AG04449 (cell line): ENCODE measurements at regions of chr11 and their contacts with region 1.

Region 1: GRCh38 chr11:123511037-123511870 is 81.2 kb downstream of the GRAMD1B start:
- DNase-seq: peak; percentile 70
- H3K4me3 ChIP-seq: peak overlapping the region; percentile 25
- CTCF ChIP-seq: peak; percentile 95

Region 2: DNA sequence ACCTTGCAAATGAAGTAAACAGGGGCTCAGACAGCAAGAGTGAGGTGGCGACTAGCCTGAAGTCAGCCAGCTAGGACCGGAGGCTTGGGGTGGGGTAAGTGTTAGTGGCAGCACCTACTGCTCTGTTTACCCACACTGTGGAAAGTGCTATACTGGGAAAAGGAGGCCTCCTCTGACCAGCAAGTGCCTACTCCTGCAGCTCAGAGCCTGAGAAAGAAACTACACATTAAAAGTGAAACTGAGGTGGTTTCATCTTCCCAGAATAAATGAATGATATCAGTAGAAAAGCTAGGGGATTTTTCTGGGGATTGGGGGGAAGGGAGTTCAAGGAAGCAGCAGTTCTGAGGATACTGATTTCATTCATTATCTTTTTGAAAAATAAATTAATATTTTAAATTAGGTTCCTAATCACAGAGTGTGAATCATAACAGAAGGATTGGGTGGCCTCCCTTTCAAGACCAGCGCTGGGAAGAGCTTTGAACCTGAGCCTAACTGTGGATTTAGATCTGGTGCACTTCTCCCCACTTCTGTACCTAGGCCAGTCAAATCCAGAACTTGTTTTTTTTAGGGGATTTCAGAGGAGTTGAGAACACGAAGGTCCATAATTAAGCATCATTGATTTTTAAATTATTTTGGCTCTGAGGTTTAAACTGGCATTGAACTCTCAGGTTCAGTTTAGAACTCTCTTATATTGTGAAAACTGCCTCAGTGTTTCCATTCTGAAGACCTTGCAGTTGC is 129.3 kb before region 1 on chr11:
- CTCF ChIA-PET with region 1: no interaction called
- POLR2A ChIA-PET with region 1: no interaction called
- DNase-seq: no peak
- H3K4me3 ChIP-seq: no peak overlapping the region
- CTCF ChIP-seq: no peak

Region 3: DNA sequence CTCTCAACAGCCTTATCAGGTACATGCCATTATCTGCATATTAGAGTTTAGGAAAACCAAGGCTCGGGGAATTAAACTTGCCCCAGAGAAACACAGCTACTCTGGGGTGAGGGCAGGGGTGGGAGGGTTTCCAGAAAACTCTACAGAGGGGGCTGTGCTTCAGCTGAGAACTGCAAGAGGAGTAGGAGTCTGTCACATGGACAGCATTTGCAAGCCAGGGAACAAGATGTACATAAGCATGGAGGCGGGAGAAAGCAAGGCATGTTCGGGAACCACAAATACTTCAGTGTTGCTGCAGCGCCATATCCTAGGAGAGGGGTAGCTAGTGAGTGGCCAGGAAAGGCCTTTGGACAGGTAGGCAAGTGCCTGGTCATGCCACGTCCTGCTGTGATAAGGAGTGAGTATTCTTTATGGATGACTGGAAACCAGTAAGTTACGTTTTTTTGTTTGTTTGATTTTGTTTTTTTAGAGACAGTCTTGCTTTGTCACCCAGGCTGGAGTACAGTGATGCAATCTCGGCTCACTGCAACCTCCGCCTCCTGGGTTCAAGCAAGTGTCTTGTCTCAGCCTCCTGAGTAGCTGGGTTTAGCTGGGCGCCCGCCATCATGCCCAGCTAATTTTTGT is 24.0 kb before region 1 on chr11:
- CTCF ChIA-PET with region 1: interaction called, 15 read pairs
- POLR2A ChIA-PET with region 1: no interaction called
- DNase-seq: no peak
- H3K4me3 ChIP-seq: no peak overlapping the region
- CTCF ChIP-seq: no peak

Region 4: GRCh38 chr11:123525511-123525918 is 14.3 kb after region 1 on chr11:
- CTCF ChIA-PET with region 1: interaction called, 44 read pairs
- POLR2A ChIA-PET with region 1: no interaction called
- DNase-seq: no peak
- H3K4me3 ChIP-seq: no peak overlapping the region
- CTCF ChIP-seq: no peak

Region 5: GRCh38 chr11:123547180-123547579 is 35.9 kb after region 1 on chr11:
- CTCF ChIA-PET with region 1: interaction called, 19 read pairs
- POLR2A ChIA-PET with region 1: no interaction called
- DNase-seq: no peak
- H3K4me3 ChIP-seq: no peak overlapping the region
- CTCF ChIP-seq: no peak

Region 6: DNA sequence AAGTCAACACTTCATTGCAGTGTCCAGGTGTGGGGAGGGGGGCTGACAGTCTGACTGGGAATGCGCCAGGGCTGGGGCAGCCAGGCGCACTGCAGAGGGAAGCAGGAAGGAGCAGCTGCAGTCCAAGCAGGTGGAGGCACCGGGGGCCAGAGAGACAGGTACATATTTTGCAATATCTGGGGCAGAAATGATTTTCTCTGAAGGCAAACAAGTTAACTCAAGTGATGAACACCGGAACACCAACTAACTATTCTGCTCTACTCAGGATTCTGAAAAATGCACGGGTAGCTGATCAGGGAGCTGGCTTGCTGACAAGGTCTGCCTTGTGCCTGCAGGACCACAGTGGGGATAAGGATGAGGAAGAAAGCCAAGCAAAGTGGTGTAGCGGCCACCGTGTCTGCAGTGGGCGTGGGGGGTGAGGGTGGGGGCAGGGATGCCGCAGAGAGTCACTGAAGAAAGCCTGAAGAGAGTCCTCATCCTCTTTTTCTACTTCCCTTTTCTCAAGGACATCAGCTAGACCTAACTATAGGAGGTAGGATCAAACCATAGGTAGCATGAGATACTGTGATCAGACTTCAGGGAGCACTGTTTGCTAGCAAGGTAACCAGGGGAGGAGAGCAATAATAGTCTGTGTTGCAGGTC is 59.8 kb after region 1 on chr11:
- CTCF ChIA-PET with region 1: interaction called, 94 read pairs
- POLR2A ChIA-PET with region 1: no interaction called
- DNase-seq: no peak
- H3K4me3 ChIP-seq: no peak overlapping the region
- CTCF ChIP-seq: no peak